CD4-positive, alpha-beta T cell (primary cell): ENCODE measurements at regions of chr14 and their contacts with region 1.

Region 1: GRCh38 chr14:59964251-59965007 is 44.5 kb downstream of the LRRC9 start:
- DNase-seq: peak in 2 of 14 experiments; percentile 13 to 18
- ATAC-seq: peak; percentile 10
- H3K4me3 ChIP-seq: peak overlapping the region; percentile 64
- H3K4me3 Mint-ChIP-seq: peak overlapping the region; percentile 94
- H3K27ac ChIP-seq: no peak overlapping the region
- H3K27ac Mint-ChIP-seq: peak overlapping the region; percentile 96
- H3K4me1 ChIP-seq: peaks cover 9% of the 10 kb centered on the region
- H3K4me1 Mint-ChIP-seq: peaks cover 22% of the 10 kb centered on the region
- H3K27me3 ChIP-seq: no peaks in the 10 kb centered on the region
- H3K27me3 Mint-ChIP-seq: no peaks in the 10 kb centered on the region
- CTCF ChIP-seq: no peak

Region 2: DNA sequence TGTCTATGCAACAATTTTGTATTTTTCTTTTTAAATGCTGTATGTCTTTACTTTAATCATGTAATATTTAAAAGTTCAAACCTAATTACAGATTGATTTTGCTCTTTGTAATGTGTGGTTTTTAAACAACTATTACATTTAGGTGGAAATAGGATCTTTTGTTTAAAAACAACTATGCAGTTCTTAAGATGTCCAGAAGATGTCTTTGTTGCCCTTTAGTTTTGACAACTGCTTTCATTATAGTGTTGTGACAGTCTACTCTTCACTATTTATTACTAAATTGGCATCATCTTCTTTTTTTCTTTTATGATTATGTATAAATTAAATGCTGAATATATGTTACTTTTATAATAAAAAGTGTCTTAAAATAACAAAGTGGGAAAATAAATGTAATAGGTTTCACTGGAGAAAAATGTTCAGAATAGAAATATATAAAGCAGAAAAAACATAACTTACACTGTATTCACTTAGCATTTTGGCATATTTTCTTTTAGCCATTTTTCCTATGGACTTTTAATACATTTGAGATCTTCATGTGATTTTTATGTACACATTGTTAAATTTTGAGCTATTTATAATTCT is 100.2 kb after region 1 on chr14:
- CTCF ChIA-PET with region 1: no interaction called
- POLR2A ChIA-PET with region 1: no interaction called
- intact Hi-C with region 1: loop called (anchors 1 to 5 kb)
- DNase-seq: peak in 3 of 14 experiments; percentile 60 to 65 (median 60)
- ATAC-seq: peak; percentile 41
- H3K4me3 ChIP-seq: no peak overlapping the region
- H3K4me3 Mint-ChIP-seq: no peak overlapping the region
- H3K27ac ChIP-seq: no peak overlapping the region
- H3K27ac Mint-ChIP-seq: no peak overlapping the region
- H3K4me1 ChIP-seq: no peaks in the 10 kb centered on the region
- H3K4me1 Mint-ChIP-seq: no peaks in the 10 kb centered on the region
- H3K27me3 ChIP-seq: peaks cover 0 to 3% of the 10 kb centered on the region in 2 experiments
- H3K27me3 Mint-ChIP-seq: peaks cover 18% of the 10 kb centered on the region
- CTCF ChIP-seq: peak; percentile 65

Region 3: DNA sequence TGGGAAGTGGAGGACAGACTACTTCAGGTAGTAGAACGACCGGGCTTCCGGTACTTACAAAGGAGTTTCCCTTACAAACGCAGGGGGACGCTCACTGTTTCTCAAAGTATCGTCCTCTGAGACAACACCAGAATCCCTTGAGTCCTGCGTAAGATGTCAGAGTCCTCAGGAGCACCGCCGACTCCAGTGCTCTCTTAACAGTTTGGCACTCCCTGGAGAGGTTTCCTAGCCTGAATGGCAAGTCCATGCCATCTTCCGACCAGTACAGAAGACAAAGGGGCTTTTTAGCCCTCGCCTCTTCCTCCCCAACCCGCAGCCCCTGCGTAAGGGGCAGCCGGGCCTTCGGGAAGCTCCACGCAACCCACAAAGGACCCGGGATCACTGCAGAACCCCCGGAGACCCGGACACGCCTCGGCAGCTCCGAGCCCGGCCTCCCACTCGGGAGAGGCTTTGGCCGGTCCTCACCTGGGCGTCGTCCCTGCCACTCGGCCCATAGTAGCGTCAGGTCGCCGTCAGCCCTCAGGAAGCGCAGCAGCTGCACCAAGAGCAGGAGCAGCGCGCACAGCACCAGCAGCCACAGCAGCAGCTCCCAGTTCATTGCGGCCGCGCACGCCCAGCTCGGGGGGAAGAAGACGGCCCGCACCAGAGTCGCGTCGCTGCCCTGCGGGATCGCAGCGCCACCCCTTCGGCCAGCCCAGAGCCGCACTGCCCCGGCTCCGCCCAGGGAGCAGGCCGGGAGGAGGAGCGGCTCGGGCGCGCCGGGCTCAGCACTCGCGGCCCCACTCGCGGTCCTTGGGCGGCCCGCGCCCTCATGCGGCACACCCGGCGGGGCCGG is 200.5 kb after region 1 on chr14 and contains the start of gene DHRS7:
- CTCF ChIA-PET with region 1: interaction called, 10 read pairs
- POLR2A ChIA-PET with region 1: interaction called, 23 read pairs
- intact Hi-C with region 1: no loop called
- DNase-seq: peak; percentile 33 to 87 (median 54)
- ATAC-seq: peak; percentile 73
- H3K4me3 ChIP-seq: peak within 1 kb of the TSS; percentile 70
- H3K4me3 Mint-ChIP-seq: peak within 1 kb of the TSS; percentile 96
- H3K27ac ChIP-seq: peak within 1 kb of the TSS; percentile 88 to 90
- H3K27ac Mint-ChIP-seq: peak within 1 kb of the TSS; percentile 97
- H3K4me1 ChIP-seq: peaks cover 32% of the 10 kb centered on the region
- H3K4me1 Mint-ChIP-seq: peaks cover 53% of the 10 kb centered on the region
- H3K27me3 ChIP-seq: no peaks in the 10 kb centered on the region
- H3K27me3 Mint-ChIP-seq: no peaks in the 10 kb centered on the region
- CTCF ChIP-seq: no peak
- total RNA-seq, gene DHRS7: 24.5 to 28.6 TPM